Naive thymus-derived CD4-positive, alpha-beta T cell (primary cell): ENCODE measurements at regions of chr1 and their contacts with region 1.

Region 1: DNA sequence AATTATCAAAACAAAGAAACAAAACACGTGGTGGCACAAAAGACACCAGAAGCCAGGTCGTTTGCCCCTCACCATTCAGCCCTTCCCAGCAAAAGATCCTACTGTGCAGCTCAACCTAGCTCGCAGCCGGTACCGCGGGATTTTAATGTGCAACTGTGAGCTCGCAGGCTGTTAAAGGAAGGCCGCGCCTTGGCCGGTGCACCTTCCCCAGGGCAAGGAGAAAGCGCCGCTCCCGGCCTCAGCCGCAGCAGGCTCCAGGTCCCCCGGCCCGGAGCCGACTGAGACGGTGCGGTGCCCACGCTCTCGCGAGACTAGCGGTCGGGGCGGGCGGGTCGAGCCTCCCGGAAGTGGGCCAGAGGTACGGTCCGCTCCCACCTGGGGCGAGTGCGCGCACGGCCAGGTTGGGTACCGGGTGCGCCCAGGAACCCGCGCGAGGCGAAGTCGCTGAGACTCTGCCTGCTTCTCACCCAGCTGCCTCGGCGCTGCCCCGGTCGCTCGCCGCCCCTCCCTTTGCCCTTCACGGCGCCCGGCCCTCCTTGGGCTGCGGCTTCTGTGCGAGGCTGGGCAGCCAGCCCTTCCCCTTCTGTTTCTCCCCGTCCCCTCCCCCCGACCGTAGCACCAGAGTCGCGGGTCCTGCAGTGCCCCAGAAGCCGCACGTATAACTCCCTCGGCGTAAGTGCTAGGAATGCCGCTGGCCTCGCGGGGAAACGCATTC is at the start of gene AGL:
- DNase-seq: peak; percentile 76 to 88 (median 86)
- ATAC-seq: peak; percentile 97
- H3K4me3 ChIP-seq: peak within 1 kb of the TSS; percentile 81
- H3K4me3 Mint-ChIP-seq: peak within 1 kb of the TSS; percentile 89 to 99 (median 96)
- H3K27ac ChIP-seq: peak within 1 kb of the TSS; percentile 75
- H3K27ac Mint-ChIP-seq: peak within 1 kb of the TSS; percentile 86 to 98 (median 96)
- H3K4me1 ChIP-seq: peaks cover 7 to 10% of the 10 kb centered on the region in 2 donors
- H3K4me1 Mint-ChIP-seq: peaks cover 20 to 42% (median 37%) of the 10 kb centered on the region in 7 donors
- H3K27me3 ChIP-seq: no peaks in the 10 kb centered on the region
- H3K27me3 Mint-ChIP-seq: no peaks in the 10 kb centered on the region
- total RNA-seq, gene AGL: 11.5 to 20.1 (median 12.5) TPM

Region 2: GRCh38 chr1:99481391-99481996 is 368.4 kb before region 1 on chr1:
- CTCF ChIA-PET with region 1: no interaction called
- POLR2A ChIA-PET with region 1: no interaction called
- intact Hi-C with region 1: no loop called
- DNase-seq: peak in 7 of 9 donors; percentile 6 to 61 (median 47)
- ATAC-seq: peak; percentile 59
- H3K4me3 ChIP-seq: no peak overlapping the region
- H3K4me3 Mint-ChIP-seq: no peak overlapping the region
- H3K27ac ChIP-seq: no peak overlapping the region
- H3K27ac Mint-ChIP-seq: no peak overlapping the region
- H3K4me1 ChIP-seq: no peaks in the 10 kb centered on the region
- H3K4me1 Mint-ChIP-seq: no peaks in the 10 kb centered on the region
- H3K27me3 ChIP-seq: no peaks in the 10 kb centered on the region
- H3K27me3 Mint-ChIP-seq: peaks cover 8 to 35% (median 17%) of the 10 kb centered on the region in 5 donors

Region 3: GRCh38 chr1:99766378-99766800 is 83.5 kb before region 1 on chr1 and contains the start of gene FRRS1:
- CTCF ChIA-PET with region 1: no interaction called
- POLR2A ChIA-PET with region 1: no interaction called
- intact Hi-C with region 1: loop called in 1 of 2 experiments (anchors 5 kb)
- DNase-seq: peak in 8 of 9 donors; percentile 8 to 49 (median 38)
- ATAC-seq: peak; percentile 79
- H3K4me3 ChIP-seq: peak within 1 kb of the TSS; percentile 73
- H3K4me3 Mint-ChIP-seq: peak within 1 kb of the TSS; percentile 84 to 98 (median 94)
- H3K27ac ChIP-seq: peak within 1 kb of the TSS; percentile 66
- H3K27ac Mint-ChIP-seq: peak within 1 kb of the TSS; percentile 41 to 96 (median 86)
- H3K4me1 ChIP-seq: peaks cover 0 to 4% of the 10 kb centered on the region in 2 donors
- H3K4me1 Mint-ChIP-seq: peaks cover 0 to 11% (median 8%) of the 10 kb centered on the region in 7 donors
- H3K27me3 ChIP-seq: no peaks in the 10 kb centered on the region
- H3K27me3 Mint-ChIP-seq: peaks cover 5 to 55% (median 5%) of the 10 kb centered on the region in 5 donors
- total RNA-seq, gene FRRS1: 0.22 to 1.4 (median 0.63) TPM

Region 4: GRCh38 chr1:99969729-99970621 is 120.1 kb after region 1 on chr1 and contains the start of gene SLC35A3:
- CTCF ChIA-PET with region 1: no interaction called
- POLR2A ChIA-PET with region 1: interaction called, 5 read pairs
- intact Hi-C with region 1: loop called (anchors 1 to 2 kb)
- DNase-seq: peak; percentile 69 to 85 (median 78)
- ATAC-seq: peak; percentile 89
- H3K4me3 ChIP-seq: peak within 1 kb of the TSS; percentile 75
- H3K4me3 Mint-ChIP-seq: peak within 1 kb of the TSS; percentile 96 to 100 (median 100)
- H3K27ac ChIP-seq: peak within 1 kb of the TSS; percentile 83
- H3K27ac Mint-ChIP-seq: peak within 1 kb of the TSS; percentile 91 to 99 (median 97)
- H3K4me1 ChIP-seq: peaks cover 6 to 20% of the 10 kb centered on the region in 2 donors
- H3K4me1 Mint-ChIP-seq: peaks cover 22 to 55% (median 40%) of the 10 kb centered on the region in 7 donors
- H3K27me3 ChIP-seq: no peaks in the 10 kb centered on the region
- H3K27me3 Mint-ChIP-seq: no peaks in the 10 kb centered on the region
- total RNA-seq, gene SLC35A3: 21.1 to 31.6 (median 27.3) TPM

Region 5: DNA sequence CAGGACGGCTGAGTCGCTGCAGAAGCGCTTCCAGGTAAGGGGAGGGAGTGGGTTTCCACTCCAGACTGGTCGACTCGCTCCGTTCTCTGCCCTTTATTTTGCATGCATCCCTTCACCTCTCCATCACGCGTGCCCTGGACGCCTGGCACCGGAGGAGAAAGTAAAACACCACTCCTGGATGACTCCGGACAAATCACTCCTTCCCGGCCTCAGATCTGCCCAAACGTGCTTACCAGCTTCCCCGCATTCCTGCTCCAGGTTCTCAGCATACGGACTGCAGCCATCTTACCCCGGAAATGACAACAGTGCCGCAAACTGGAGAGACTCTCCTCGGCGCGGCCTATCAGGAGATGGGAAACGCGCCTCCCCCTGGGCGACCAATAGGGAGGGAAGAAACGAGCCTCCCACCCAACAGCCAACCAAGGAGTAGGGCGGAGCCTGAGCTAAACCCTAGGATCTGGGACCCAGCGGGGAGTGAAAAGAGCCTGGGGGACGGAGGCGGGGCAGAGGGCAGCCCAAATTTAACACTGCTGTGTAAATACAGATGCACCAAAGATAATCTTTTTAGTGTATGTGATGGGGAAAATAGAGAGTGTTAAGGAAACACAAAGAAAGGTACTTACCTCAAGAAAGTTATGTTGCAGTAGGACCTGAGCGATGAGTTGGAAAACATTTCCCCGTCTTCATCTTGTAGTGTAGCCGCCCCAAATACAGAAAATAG is 399.8 kb after region 1 on chr1 and contains the start of gene DBT:
- CTCF ChIA-PET with region 1: no interaction called
- POLR2A ChIA-PET with region 1: no interaction called
- intact Hi-C with region 1: loop called in 1 of 2 experiments (anchors 1 kb)
- DNase-seq: peak; percentile 64 to 93 (median 88)
- ATAC-seq: peak; percentile 100
- H3K4me3 ChIP-seq: peak within 1 kb of the TSS; percentile 82
- H3K4me3 Mint-ChIP-seq: peak within 1 kb of the TSS in 1 of 10 donors; percentile 30
- H3K27ac ChIP-seq: peak within 1 kb of the TSS; percentile 79
- H3K27ac Mint-ChIP-seq: peak within 1 kb of the TSS in 2 of 9 donors; percentile 22 to 26
- H3K4me1 ChIP-seq: peaks cover 7 to 23% of the 10 kb centered on the region in 2 donors
- H3K4me1 Mint-ChIP-seq: peaks cover 9 to 24% (median 19%) of the 10 kb centered on the region in 7 donors
- H3K27me3 ChIP-seq: no peaks in the 10 kb centered on the region
- H3K27me3 Mint-ChIP-seq: peaks cover 0 to 8% (median 0%) of the 10 kb centered on the region in 5 donors
- total RNA-seq, gene DBT: 9.2 to 18.4 (median 9.7) TPM